ENCODE measurements at regions of chr1 and their contacts with region 1.

Region 1: DNA sequence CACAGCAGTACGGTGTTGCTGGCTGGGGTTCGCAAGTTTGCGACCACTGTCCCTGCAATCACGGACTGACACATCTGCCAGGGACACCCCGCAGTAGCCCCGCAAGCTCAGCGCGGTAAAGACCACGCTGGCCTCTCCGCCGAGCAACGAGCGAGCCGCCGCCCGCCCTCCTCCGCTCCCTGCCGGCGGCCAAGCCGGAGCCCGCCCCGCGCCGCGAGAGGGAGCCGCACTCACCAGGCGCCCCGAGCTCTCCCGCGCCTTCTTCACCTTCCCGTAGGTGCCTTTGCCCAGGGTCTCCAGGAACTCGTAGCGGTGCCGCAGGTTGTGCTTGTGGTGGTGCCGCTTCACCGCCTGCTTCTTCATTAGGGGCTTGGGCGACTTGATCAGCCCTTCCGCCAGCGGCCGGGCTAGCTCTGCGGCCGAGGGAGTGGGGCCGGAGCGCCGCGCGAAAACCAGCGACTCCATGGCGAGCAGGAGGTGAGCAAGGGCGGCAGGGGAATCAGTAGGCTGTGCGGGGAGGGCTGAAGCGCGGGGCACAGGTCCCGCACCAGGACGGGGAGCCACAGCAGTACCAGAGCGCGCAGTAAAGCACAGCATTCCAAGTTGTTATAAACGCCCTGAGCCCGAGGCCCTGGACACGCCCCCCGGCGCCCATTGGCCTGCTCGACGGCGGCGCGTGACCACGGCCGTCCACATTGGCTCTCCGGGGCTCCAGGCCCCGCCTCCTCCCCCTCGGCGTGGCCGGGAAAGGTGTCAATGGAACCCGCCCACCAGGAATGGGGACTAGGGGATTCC is at the start of gene NUAK2:
- DNase-seq: peak; percentile 96

Region 2: DNA sequence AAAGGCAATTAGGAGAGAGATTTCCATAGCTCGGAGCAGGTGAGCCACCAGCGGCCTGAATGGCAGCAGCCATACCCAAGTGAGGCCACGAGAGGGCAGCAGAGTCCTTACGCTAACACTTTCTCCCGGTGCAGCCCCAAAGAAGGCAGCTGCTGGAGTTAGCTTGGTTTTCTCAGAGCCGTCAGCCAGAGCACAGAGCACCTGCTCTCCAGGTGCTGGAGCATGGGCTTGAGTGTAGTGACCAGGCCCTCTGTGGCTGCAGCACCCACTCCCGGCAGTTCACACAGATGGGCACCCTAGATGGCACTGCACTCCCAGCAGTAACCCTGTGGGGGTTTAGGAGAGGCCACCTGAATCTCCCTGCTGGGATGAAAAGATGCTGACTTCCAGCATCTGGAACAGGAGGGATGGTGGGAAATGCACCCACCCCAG is 47.8 kb before region 1 on chr1:
- CTCF ChIA-PET with region 1: interaction called, 235 read pairs
- POLR2A ChIA-PET with region 1: interaction called, 18 read pairs
- DNase-seq: peak; percentile 95

Region 3: DNA sequence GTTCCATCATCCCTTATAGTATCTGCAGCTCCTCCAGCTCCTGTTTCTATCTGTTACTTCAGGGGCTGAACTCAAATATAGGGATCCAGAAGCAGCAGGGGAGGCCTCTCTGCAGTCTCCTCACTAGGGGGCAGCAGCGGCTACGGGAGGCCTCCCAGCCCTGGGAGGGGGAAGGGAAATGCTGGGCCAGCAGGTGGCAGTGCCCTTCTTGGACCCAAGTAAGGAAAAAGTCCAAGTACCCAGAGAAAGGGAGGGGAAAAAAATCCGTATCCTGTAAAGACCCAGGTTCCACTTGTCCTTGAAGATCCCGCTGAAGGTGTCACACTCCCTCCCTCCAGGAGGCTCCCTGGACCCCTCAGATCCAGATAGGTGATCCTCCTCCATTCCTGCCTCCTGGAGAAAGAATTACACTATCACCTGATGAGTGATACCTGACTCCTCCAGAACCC is 14.3 kb after region 1 on chr1:
- CTCF ChIA-PET with region 1: interaction called, 20 read pairs
- POLR2A ChIA-PET with region 1: no interaction called
- DNase-seq: peak; percentile 85

Region 4: GRCh38 chr1:205375835-205376545 is 54.6 kb after region 1 on chr1:
- CTCF ChIA-PET with region 1: no interaction called
- POLR2A ChIA-PET with region 1: no interaction called
- DNase-seq: peak; percentile 69

Measured in HEK293T (cell line).